ENCODE measurements at regions of chr11 and their contacts with region 1.

Region 1: DNA sequence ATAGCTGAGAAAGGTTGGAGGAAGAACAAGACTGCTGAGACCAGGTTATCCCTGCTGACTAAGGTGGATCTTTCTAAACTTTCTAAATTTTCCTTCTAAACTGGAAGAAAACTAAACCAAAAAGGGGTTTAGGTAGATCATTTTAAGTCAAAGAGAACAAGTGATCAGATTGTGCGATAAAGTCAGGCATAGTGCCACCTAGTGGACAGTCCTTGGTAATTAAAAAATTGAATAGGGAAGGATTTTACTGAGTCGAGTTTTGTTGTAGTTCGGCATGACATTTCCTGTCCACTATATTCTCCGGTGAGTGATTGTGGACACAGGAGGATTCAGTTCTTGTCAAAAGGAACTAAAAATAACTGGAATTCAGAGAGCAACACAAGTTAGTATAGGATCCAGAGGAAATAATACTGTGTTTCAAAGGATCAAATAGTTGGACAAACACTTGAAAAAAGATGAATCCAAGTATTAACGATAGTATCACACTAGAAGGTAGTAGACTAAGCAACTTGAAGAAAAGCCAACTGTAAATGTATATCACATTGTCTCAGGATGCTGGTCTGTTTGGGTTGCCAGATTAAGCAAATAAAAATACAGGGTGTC is 1236.4 kb downstream of the FAM181B start:
- DNase-seq: no peak
- H3K4me3 ChIP-seq: no peak overlapping the region
- H3K27ac ChIP-seq: no peak overlapping the region
- H3K4me1 ChIP-seq: peaks cover 0 to 3% (median 2%) of the 10 kb centered on the region in 4 experiments; a peak in 3 of 7 replicates
- H3K27me3 ChIP-seq: no peaks in the 10 kb centered on the region
- CTCF ChIP-seq: peak in 2 of 3 experiments; percentile 32 to 58; a peak in 2 of 4 replicates
- EP300 ChIP-seq: no peak
- POLR2A ChIP-seq: no peak
- RAD21 ChIP-seq: peak; percentile 43 to 54

Region 2: GRCh38 chr11:81420668-81421550 is 76.4 kb before region 1 on chr11:
- CTCF ChIA-PET with region 1: interaction called, 12 read pairs
- POLR2A ChIA-PET with region 1: no interaction called
- DNase-seq: peak; percentile 17 to 46
- H3K4me3 ChIP-seq: peak overlapping the region in 1 of 4 experiments; percentile 29; a peak in 1 of 8 replicates
- H3K27ac ChIP-seq: peak overlapping the region; percentile 49; the same call in 1 of the 2 replicates
- H3K4me1 ChIP-seq: peaks cover 3 to 9% (median 6%) of the 10 kb centered on the region in 4 experiments; a peak in 5 of 7 replicates
- H3K27me3 ChIP-seq: no peaks in the 10 kb centered on the region
- CTCF ChIP-seq: peak in 1 of 3 experiments; percentile 18; a peak in 2 of 4 replicates
- EP300 ChIP-seq: no peak
- POLR2A ChIP-seq: no peak
- RAD21 ChIP-seq: peak; percentile 19 to 29; a peak in 3 of 4 replicates

Region 3: GRCh38 chr11:81432333-81432732 is 65.0 kb before region 1 on chr11:
- CTCF ChIA-PET with region 1: no interaction called
- POLR2A ChIA-PET with region 1: no interaction called
- DNase-seq: no peak
- H3K4me3 ChIP-seq: no peak overlapping the region
- H3K27ac ChIP-seq: no peak overlapping the region
- H3K4me1 ChIP-seq: no peaks in the 10 kb centered on the region
- H3K27me3 ChIP-seq: no peaks in the 10 kb centered on the region
- CTCF ChIP-seq: no peak
- EP300 ChIP-seq: no peak
- POLR2A ChIP-seq: no peak
- RAD21 ChIP-seq: no peak

Region 4: DNA sequence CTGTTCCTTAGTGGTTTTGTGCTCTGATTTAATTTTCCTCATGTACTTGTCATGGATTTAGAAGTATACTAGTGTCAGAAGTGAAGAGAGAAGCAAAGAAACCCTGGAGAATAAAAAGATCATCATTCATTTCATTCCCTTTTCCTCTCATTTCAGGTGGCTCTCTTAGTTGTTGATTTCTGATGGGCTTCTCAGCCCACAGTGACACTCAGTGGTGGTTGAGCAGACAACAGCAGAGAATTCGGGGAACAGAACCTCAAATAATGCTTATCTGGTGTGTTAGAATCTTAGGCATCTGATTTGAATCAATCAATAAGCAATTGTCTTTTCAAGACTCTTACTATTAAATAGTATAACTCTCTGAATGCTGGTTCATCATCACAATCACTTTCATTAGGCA is 53.0 kb before region 1 on chr11:
- CTCF ChIA-PET with region 1: no interaction called
- POLR2A ChIA-PET with region 1: no interaction called
- DNase-seq: no peak
- H3K4me3 ChIP-seq: no peak overlapping the region
- H3K27ac ChIP-seq: no peak overlapping the region
- H3K4me1 ChIP-seq: no peaks in the 10 kb centered on the region
- H3K27me3 ChIP-seq: no peaks in the 10 kb centered on the region
- CTCF ChIP-seq: peak; percentile 15 to 63 (median 50)
- EP300 ChIP-seq: no peak
- POLR2A ChIP-seq: no peak
- RAD21 ChIP-seq: peak; percentile 76 to 84

Measured in H1 (cell line).